ENCODE measurements at regions of chr1 and their contacts with region 1.

Region 1: GRCh38 chr1:75785983-75786853 is at the start of gene RABGGTB:
- DNase-seq: peak; percentile 94
- H3K4me3 Mint-ChIP-seq: peak within 1 kb of the TSS; percentile 98
- H3K27ac Mint-ChIP-seq: peak within 1 kb of the TSS; percentile 98
- H3K4me1 Mint-ChIP-seq: peaks cover 27% of the 10 kb centered on the region
- H3K27me3 Mint-ChIP-seq: no peaks in the 10 kb centered on the region
- CTCF ChIP-seq: no peak
- total RNA-seq, gene RABGGTB: 116 and 127 TPM in 2 replicates

Region 2: GRCh38 chr1:75353051-75353450 is 433.2 kb before region 1 on chr1:
- CTCF ChIA-PET with region 1: no interaction called
- POLR2A ChIA-PET with region 1: no interaction called
- intact Hi-C with region 1: no loop called
- DNase-seq: no peak
- H3K4me3 Mint-ChIP-seq: no peak overlapping the region
- H3K27ac Mint-ChIP-seq: no peak overlapping the region
- H3K4me1 Mint-ChIP-seq: no peaks in the 10 kb centered on the region
- H3K27me3 Mint-ChIP-seq: no peaks in the 10 kb centered on the region
- CTCF ChIP-seq: no peak

Region 3: GRCh38 chr1:75724472-75725022 is 61.7 kb before region 1 on chr1 and contains the start of gene ACADM:
- CTCF ChIA-PET with region 1: interaction called, 4 read pairs
- POLR2A ChIA-PET with region 1: interaction called, 34 read pairs
- intact Hi-C with region 1: loop called (anchors 1 kb)
- DNase-seq: peak; percentile 91
- H3K4me3 Mint-ChIP-seq: peak within 1 kb of the TSS; percentile 99
- H3K27ac Mint-ChIP-seq: peak within 1 kb of the TSS; percentile 97
- H3K4me1 Mint-ChIP-seq: peaks cover 31% of the 10 kb centered on the region
- H3K27me3 Mint-ChIP-seq: no peaks in the 10 kb centered on the region
- CTCF ChIP-seq: no peak
- total RNA-seq, gene ACADM: 35.7 and 43.2 TPM in 2 replicates

Region 4: DNA sequence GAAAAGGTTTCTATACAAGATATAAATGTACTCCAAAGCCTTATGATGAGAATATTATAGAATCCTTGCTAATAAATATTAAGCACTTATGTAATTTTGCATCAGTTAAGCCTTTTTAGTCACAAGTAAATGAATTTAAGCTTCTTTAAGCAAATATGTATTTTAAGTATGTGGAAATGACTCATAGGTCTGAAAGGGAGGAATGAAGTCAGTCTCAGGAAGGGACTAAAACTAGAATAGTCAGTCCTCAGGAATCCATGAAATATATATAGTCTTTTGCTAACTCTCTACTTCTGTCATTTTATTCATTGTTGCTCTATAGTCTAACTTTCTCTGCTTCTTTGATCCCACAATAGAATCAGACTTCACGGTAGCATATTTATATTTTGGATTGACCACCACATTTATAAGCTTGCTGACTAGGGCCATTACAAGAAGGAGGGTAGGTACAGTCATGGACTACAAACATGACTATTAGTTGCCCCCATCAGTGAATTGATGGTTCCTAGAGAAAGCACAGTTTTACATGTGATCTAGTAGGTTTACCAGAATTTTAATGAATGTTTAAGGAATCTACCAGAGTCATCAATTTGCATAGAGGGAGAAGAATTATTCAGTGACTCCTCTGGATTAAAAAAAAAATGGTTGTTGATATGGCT is 20.4 kb before region 1 on chr1:
- CTCF ChIA-PET with region 1: interaction called, 3 read pairs
- POLR2A ChIA-PET with region 1: interaction called, 10 read pairs
- intact Hi-C with region 1: loop called (anchors 2 kb)
- DNase-seq: peak; percentile 47
- H3K4me3 Mint-ChIP-seq: no peak overlapping the region
- H3K27ac Mint-ChIP-seq: peak overlapping the region; percentile 70
- H3K4me1 Mint-ChIP-seq: peaks cover 6% of the 10 kb centered on the region
- H3K27me3 Mint-ChIP-seq: no peaks in the 10 kb centered on the region
- CTCF ChIP-seq: no peak

Region 5: GRCh38 chr1:75771978-75772377 is 14.2 kb before region 1 on chr1:
- CTCF ChIA-PET with region 1: interaction called, 3 read pairs
- POLR2A ChIA-PET with region 1: interaction called, 11 read pairs
- intact Hi-C with region 1: no loop called
- DNase-seq: no peak
- H3K4me3 Mint-ChIP-seq: no peak overlapping the region
- H3K27ac Mint-ChIP-seq: no peak overlapping the region
- H3K4me1 Mint-ChIP-seq: peaks cover 10% of the 10 kb centered on the region
- H3K27me3 Mint-ChIP-seq: no peaks in the 10 kb centered on the region
- CTCF ChIP-seq: no peak

Region 6: DNA sequence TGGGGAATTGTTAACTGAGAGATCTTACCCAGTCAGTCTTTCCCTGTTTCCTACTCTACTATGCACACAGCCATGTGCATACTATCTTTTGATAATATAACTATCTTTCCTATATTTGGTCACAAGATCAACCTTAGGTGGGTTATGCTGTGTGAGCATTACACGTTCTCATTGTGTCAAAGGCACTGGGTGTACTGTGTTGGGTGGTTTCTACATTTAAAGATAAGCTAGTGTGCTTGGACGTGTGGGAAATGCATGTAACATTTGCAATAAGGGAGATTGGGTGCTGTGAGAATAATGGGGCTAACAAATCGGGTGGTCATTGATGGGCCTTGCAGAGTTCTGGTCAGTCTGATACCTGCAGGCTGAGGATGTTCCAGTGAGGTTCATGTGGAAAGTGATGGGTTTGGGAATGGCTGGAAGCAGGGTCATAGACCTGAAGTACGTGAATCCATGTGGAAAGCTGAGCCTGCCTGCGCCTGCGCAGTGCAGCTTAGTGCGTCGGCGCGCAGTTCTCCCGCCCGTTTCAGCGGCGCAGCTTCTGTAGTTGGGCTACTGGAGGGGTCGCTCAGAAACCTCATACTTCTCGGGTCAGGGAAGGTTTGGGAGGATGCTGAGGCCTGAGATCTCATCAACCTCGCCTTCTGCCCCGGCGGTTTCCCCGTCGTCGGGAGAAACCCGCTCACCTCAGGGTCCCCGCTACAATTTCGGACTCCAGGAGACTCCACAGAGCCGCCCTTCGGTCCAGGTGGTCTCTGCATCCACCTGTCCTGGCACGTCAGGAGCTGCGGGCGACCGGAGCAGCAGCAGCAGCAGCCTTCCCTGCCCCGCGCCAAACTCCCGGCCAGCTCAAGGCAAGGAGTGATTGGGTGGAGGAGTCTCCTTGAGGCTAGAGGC is 10.4 kb after region 1 on chr1 and contains the start of gene MSH4:
- CTCF ChIA-PET with region 1: interaction called, 3 read pairs
- POLR2A ChIA-PET with region 1: interaction called, 20 read pairs
- intact Hi-C with region 1: no loop called
- DNase-seq: no peak
- H3K4me3 Mint-ChIP-seq: no peak within 1 kb of the TSS
- H3K27ac Mint-ChIP-seq: no peak within 1 kb of the TSS
- H3K4me1 Mint-ChIP-seq: peaks cover 2% of the 10 kb centered on the region
- H3K27me3 Mint-ChIP-seq: no peaks in the 10 kb centered on the region
- CTCF ChIP-seq: no peak
- total RNA-seq, gene MSH4: 0.17 and 0.21 TPM in 2 replicates

Region 7: GRCh38 chr1:76023669-76024435 is 237.6 kb after region 1 on chr1:
- CTCF ChIA-PET with region 1: no interaction called
- POLR2A ChIA-PET with region 1: no interaction called
- intact Hi-C with region 1: no loop called
- DNase-seq: no peak
- H3K4me3 Mint-ChIP-seq: no peak overlapping the region
- H3K27ac Mint-ChIP-seq: no peak overlapping the region
- H3K4me1 Mint-ChIP-seq: peaks cover 8% of the 10 kb centered on the region
- H3K27me3 Mint-ChIP-seq: no peaks in the 10 kb centered on the region
- CTCF ChIP-seq: no peak